Ascending aorta (tissue), 2 donors: ENCODE measurements at regions of chr16 and their contacts with region 1.

Region 1: DNA sequence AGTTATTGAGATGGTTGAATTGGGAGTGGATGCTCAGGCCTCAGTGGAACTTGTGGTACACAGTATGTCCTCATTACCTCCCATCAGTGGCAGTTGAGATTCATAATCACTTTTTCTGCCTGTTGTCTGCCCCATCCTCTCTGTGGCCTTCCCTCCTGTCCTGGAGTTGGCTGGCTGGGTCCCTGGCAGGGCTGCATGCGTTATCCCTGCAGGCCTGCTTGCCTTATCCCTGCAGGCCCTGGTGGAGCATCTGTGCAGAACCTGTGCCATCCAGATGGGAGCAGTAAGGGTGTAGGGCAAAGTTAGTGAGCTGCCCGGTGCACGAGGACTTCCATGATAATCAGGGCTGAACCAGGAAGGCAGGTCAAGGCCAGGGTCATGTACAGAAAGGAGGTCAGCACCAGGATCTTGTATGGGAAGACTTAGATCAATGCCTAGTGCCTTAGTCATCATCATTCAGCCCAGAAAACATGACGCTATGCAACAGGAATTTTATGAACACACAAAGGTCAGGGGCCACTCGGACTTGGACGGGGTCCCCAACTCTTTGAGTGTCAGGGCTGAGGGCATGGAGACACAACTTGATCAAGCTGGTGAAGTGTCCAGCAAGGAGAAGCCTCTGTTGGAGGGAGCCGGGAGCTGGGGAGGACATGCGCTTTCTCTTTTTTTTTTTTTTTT is 47.2 kb downstream of the ABCC1 start:
- DNase-seq: peak in 1 of 2 donors; percentile 82
- H3K4me3 ChIP-seq: no peak overlapping the region
- H3K27ac ChIP-seq: peak overlapping the region; percentile 63 to 82
- H3K4me1 ChIP-seq: peaks cover 18 to 63% of the 10 kb centered on the region in 2 donors
- H3K27me3 ChIP-seq: no peaks in the 10 kb centered on the region
- CTCF ChIP-seq: no peak

Region 2: DNA sequence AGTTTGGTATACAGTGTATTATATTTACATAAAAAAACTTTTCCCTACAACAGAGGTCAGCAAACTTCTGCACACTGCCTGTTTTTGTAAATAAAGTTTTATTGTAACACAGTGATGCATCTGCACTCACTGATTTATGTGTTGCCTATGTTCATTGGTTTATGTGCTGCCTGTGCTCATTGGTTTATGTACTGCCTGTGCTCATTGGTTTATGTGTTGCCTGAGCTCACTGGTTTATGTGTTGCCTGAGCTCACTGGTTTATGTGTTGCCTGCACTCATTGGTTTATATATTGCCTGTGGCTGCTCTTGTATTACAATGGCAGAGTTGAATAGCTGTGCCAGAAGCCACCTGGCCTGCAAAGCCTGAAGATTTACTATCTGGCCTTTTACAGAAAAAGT is 221.4 kb before region 1 on chr16:
- intact Hi-C with region 1: no loop called
- DNase-seq: no peak
- H3K4me3 ChIP-seq: no peak overlapping the region
- H3K27ac ChIP-seq: peak overlapping the region in 1 of 2 donors; percentile 65
- H3K4me1 ChIP-seq: peaks cover 18 to 53% of the 10 kb centered on the region in 2 donors
- H3K27me3 ChIP-seq: no peaks in the 10 kb centered on the region
- CTCF ChIP-seq: no peak

Region 3: GRCh38 chr16:15976929-15977637 is 19.5 kb before region 1 on chr16:
- intact Hi-C with region 1: loop called (anchors 2 kb)
- DNase-seq: peak in 1 of 2 donors; percentile 82
- H3K4me3 ChIP-seq: peak overlapping the region in 1 of 2 donors; percentile 14
- H3K27ac ChIP-seq: peak overlapping the region; percentile 94 to 97
- H3K4me1 ChIP-seq: peaks cover 28 to 66% of the 10 kb centered on the region in 2 donors
- H3K27me3 ChIP-seq: no peaks in the 10 kb centered on the region
- CTCF ChIP-seq: no peak

Region 4: DNA sequence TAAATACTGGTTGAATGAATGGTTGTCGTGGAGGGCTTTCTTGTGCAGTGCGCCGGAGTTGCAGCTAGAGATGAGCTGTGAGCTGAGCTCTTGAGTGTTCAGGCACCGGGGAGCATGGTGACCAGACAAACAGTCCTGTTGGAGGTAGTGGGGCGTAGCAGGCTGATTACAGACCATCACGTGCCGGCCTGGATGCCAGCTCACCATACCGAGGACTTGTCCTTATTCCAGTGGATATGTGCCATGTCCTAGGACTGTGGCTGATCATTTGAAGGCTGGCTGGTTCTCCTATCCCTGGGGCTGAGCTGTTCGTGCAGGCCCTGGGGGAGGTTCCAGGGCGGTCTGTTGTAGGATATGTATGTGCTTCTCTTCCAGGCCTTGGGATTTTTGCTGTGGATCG is 12.8 kb after region 1 on chr16:
- intact Hi-C with region 1: loop called (anchors 1 kb)
- DNase-seq: no peak
- H3K4me3 ChIP-seq: no peak overlapping the region
- H3K27ac ChIP-seq: no peak overlapping the region
- H3K4me1 ChIP-seq: peaks cover 0 to 24% of the 10 kb centered on the region in 2 donors
- H3K27me3 ChIP-seq: no peaks in the 10 kb centered on the region
- CTCF ChIP-seq: no peak

Region 5: DNA sequence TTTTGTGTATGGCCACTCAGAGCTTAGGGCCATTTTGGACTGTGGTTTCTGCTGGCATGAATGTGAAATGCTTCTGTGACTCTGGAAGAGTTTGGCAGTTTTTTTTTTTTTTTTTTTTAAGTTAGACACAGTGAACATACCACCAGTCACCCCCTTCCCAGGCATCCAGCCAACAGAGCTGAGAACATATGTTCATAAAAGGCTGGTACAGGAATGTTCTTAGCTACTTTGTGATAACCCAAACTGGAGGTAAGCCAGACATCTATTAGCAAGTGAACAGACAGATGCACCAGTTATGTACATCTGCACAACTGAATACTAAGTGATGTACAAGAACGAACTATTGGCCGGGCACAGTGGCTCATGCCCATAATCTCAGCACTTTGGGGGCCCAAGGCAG is 45.5 kb after region 1 on chr16:
- intact Hi-C with region 1: no loop called
- DNase-seq: no peak
- H3K4me3 ChIP-seq: no peak overlapping the region
- H3K27ac ChIP-seq: no peak overlapping the region
- H3K4me1 ChIP-seq: peaks cover 0 to 6% of the 10 kb centered on the region in 2 donors
- H3K27me3 ChIP-seq: no peaks in the 10 kb centered on the region
- CTCF ChIP-seq: no peak